ENCODE measurements at regions of chr12 and their contacts with region 1.

Region 1: GRCh38 chr12:103548622-103549601 is 38.2 kb upstream of the STAB2 start:
- DNase-seq: peak; percentile 73
- H3K4me3 ChIP-seq: no peak overlapping the region
- H3K27ac ChIP-seq: no peak overlapping the region
- H3K4me1 ChIP-seq: no peaks in the 10 kb centered on the region
- CTCF ChIP-seq: peak; percentile 98

Region 2: DNA sequence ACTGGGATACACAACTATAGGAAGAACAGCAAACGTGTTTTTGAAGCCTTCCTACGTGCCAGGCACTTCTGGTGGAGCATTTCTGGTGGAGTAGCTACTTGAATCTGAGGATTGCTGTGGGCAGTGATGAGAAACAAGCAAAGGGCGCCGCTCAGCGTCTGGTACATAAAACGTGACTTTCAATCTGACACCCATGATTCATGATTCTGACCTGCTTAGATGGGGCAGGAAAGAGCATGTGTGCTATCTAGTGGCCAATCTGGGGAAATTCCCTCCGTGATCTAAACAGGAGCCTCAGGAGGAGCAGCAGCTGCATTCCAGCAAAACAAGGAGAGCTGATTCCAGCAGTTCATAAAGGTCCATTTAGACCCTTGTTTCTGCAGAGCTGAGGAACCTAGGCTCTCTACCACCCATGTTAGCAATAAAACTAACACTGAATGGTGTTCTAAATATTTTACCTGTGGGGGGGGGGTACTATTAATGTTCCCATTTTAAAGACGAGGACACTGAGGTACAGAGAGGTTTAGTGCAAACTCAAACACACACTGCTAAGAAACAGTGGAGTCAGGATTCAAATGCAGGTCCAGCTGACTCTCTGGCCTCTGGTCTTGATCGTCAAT is 669.7 kb before region 1 on chr12:
- CTCF ChIA-PET with region 1: interaction called, 3 read pairs
- POLR2A ChIA-PET with region 1: no interaction called
- intact Hi-C with region 1: loop called (anchors 1 kb)
- DNase-seq: peak; percentile 52
- H3K4me3 ChIP-seq: no peak overlapping the region
- H3K27ac ChIP-seq: no peak overlapping the region
- H3K4me1 ChIP-seq: no peaks in the 10 kb centered on the region
- CTCF ChIP-seq: peak; percentile 75

Region 3: DNA sequence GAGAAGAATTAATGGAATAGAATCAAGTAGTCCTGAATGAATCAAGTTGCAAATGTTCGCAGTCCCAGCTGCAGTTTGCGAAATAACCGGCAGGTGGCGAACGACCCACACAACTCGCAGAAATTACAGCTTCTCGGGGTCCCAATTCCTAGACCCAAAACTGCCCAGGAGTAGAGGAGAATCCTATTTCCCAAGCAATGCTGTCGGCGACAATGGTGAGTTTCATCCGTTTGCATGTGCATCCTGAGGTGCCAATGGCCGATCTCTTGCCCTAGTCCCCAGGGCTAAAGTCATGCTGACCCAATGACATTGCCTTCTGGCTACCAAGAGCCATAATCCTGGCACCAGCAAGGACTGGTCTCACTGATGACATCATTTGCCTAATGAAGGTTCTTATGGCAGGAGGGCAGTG is 600.0 kb before region 1 on chr12:
- CTCF ChIA-PET with region 1: interaction called, 5 read pairs
- POLR2A ChIA-PET with region 1: no interaction called
- intact Hi-C with region 1: loop called (anchors 1 kb)
- DNase-seq: peak; percentile 40
- H3K4me3 ChIP-seq: no peak overlapping the region
- H3K27ac ChIP-seq: no peak overlapping the region
- H3K4me1 ChIP-seq: no peaks in the 10 kb centered on the region
- CTCF ChIP-seq: peak; percentile 97

Region 4: DNA sequence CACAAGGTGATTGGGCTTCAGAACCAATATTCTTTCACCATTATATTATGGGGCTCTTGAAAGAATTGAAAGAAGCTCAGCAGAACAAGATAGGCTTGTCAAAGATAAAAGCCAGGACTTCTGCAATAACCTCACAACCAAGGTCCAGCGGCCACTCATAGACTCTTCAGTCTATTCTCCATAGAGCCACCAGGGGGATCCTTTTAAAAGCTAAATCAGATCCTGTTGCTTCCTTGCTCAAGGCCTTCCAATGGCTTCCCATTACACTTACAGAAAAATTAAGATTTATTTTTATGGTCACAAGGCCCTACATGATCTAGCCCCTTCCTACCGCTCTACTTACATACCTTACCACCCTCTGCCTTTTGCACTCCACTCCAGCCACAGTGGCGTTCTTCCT is 222.7 kb before region 1 on chr12:
- CTCF ChIA-PET with region 1: no interaction called
- POLR2A ChIA-PET with region 1: no interaction called
- intact Hi-C with region 1: loop called (anchors 2 kb)
- DNase-seq: peak; percentile 33
- H3K4me3 ChIP-seq: no peak overlapping the region
- H3K27ac ChIP-seq: no peak overlapping the region
- H3K4me1 ChIP-seq: no peaks in the 10 kb centered on the region
- CTCF ChIP-seq: peak; percentile 70

Measured in OCI-LY7 (cell line).